ENCODE measurements at regions of chr6 and their contacts with region 1.

Region 1: DNA sequence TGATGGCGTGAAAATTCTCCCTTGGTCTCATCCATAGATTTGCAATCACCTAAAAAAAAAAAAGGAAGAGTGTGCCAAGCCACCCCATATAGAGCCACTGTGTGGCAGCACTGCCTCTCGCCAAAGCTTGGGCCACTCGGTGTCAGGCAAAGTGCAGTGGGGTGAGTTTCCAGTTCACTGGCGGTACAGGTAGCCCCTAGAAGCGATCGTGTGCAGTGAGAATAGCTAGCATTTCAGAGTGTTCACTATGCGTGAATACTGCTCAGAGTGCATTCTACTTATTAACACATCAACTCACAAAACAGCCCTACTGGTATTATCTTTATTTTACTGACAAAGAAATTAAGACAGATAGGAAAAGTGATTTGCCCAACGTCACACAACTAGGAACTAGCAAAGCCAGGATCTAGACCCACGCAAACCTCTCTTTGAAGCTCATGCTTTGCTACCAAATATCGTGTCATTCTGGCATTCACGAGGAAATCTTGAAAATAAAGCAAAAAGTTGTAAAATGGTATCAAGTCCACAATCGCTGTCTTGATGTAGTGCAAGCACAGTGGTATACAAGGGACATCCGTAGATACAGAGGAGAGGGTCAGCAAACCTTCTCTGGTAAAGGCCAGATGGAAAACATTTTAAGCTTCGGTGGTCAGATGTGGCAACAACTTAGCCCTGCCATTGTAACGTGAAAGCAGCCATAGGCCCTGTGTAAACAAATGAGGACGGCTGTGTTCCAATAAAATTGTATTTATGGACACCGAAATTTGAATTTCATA is 10.4 kb upstream of the GCNT2 start:
- DNase-seq: peak; percentile 75
- H3K4me3 ChIP-seq: no peak overlapping the region
- H3K27ac ChIP-seq: no peak overlapping the region
- H3K4me1 ChIP-seq: no peaks in the 10 kb centered on the region
- H3K27me3 ChIP-seq: peaks cover 0 to 4% of the 10 kb centered on the region in 2 experiments
- CTCF ChIP-seq: peak; percentile 82 to 83
- POLR2A ChIP-seq: no peak

Region 2: GRCh38 chr6:10441004-10441662 is 69.6 kb before region 1 on chr6:
- CTCF ChIA-PET with region 1: no interaction called
- POLR2A ChIA-PET with region 1: no interaction called
- dilution Hi-C with region 1: no loop called
- intact Hi-C with region 1: no loop called
- DNase-seq: no peak
- H3K4me3 ChIP-seq: no peak overlapping the region
- H3K27ac ChIP-seq: no peak overlapping the region
- H3K4me1 ChIP-seq: no peaks in the 10 kb centered on the region
- H3K27me3 ChIP-seq: no peaks in the 10 kb centered on the region
- CTCF ChIP-seq: no peak
- POLR2A ChIP-seq: no peak

Region 3: DNA sequence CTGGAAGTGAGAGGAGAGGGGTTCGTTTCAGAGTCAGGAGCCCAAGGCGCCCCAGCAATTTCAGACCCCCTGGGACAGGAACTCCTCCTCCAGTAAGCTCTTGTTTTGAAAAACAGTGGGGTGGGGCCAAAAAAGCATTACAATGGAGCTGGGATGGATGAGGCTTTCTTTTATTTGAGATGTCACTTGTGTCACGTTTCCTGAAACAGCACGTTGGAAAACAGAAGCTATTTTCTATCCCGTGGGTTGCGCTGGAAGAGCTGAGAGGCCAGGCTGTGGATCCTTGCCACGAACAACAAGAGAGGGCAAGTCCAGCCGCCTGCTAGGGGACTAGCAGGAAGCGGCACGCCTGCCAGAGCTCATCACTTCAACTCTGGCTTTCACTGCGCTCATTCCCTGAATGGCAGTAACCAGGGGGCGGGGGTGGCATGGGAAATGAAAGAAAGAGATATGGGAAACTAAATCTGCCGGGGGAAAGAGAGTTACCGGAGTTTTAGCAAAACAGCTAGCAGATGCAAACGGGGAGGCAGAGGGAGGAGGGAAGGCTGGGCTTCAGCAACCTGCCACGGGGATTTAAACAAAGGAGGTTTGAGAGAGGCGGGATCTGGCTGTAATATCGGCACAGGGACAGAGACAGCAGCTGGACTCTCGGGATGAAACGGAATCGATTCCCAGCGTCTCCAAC is 45.0 kb after region 1 on chr6:
- CTCF ChIA-PET with region 1: interaction called, 9 read pairs
- POLR2A ChIA-PET with region 1: interaction called, 4 read pairs
- dilution Hi-C with region 1: no loop called
- intact Hi-C with region 1: loop called (anchors 2 kb)
- DNase-seq: peak; percentile 82
- H3K4me3 ChIP-seq: peak overlapping the region; percentile 19 to 57 (median 24)
- H3K27ac ChIP-seq: peak overlapping the region; percentile 74
- H3K4me1 ChIP-seq: peaks cover 25% of the 10 kb centered on the region
- H3K27me3 ChIP-seq: no peaks in the 10 kb centered on the region
- CTCF ChIP-seq: no peak
- POLR2A ChIP-seq: no peak

Region 4: DNA sequence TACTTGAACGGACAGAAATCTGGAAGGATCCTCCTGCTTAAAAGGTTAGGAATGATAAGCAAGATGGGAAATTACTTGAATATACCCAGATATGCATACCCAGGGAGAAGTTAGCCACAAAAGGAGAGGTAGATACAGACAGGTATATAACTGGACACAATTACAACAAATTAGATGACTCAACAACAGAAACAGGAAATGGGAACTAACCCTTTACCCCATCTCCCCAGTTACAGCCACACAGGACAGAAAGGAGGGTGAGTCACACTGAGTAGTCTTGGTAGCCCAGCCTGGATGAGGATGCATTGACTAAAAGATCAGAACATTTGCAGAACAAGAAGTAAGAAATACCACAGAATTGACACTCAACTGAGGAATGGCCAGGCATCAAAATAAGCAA is 122.4 kb after region 1 on chr6:
- CTCF ChIA-PET with region 1: interaction called, 3 read pairs
- POLR2A ChIA-PET with region 1: no interaction called
- dilution Hi-C with region 1: no loop called
- intact Hi-C with region 1: loop called (anchors 2 kb)
- DNase-seq: peak; percentile 76
- H3K4me3 ChIP-seq: no peak overlapping the region
- H3K27ac ChIP-seq: peak overlapping the region; percentile 35
- H3K4me1 ChIP-seq: peaks cover 10% of the 10 kb centered on the region
- H3K27me3 ChIP-seq: no peaks in the 10 kb centered on the region
- CTCF ChIP-seq: no peak
- POLR2A ChIP-seq: no peak

Region 5: GRCh38 chr6:10800829-10801535 is 290.2 kb after region 1 on chr6:
- CTCF ChIA-PET with region 1: interaction called, 28 read pairs
- POLR2A ChIA-PET with region 1: no interaction called
- dilution Hi-C with region 1: no loop called
- intact Hi-C with region 1: loop called (anchors 1 kb)
- DNase-seq: peak; percentile 64
- H3K4me3 ChIP-seq: no peak overlapping the region
- H3K27ac ChIP-seq: no peak overlapping the region
- H3K4me1 ChIP-seq: peaks cover 2% of the 10 kb centered on the region
- H3K27me3 ChIP-seq: no peaks in the 10 kb centered on the region
- CTCF ChIP-seq: peak; percentile 94 to 99
- POLR2A ChIP-seq: no peak